Caco-2 (cell line): ENCODE measurements at regions of chr22 and their contacts with region 1.

Region 1: GRCh38 chr22:22357024-22357883 is 112.7 kb downstream of the VPREB1 start:
- DNase-seq: peak; percentile 88 to 91
- H3K4me3 ChIP-seq: no peak overlapping the region
- H3K4me3 Mint-ChIP-seq: no peak overlapping the region
- H3K27ac Mint-ChIP-seq: no peak overlapping the region
- H3K4me1 ChIP-seq: no peaks in the 10 kb centered on the region
- H3K4me1 Mint-ChIP-seq: no peaks in the 10 kb centered on the region
- H3K27me3 ChIP-seq: no peaks in the 10 kb centered on the region
- H3K27me3 Mint-ChIP-seq: peaks cover 16% of the 10 kb centered on the region
- CTCF ChIP-seq: peak; percentile 67 to 79

Region 2: GRCh38 chr22:22342697-22343580 is 14.3 kb before region 1 on chr22:
- CTCF ChIA-PET with region 1: interaction called, 3 read pairs
- POLR2A ChIA-PET with region 1: no interaction called
- intact Hi-C with region 1: loop called (anchors 2 kb)
- DNase-seq: peak; percentile 93 to 94
- H3K4me3 ChIP-seq: no peak overlapping the region
- H3K4me3 Mint-ChIP-seq: no peak overlapping the region
- H3K27ac Mint-ChIP-seq: no peak overlapping the region
- H3K4me1 ChIP-seq: peaks cover 13% of the 10 kb centered on the region; the same call in 1 of the 2 replicates
- H3K4me1 Mint-ChIP-seq: no peaks in the 10 kb centered on the region
- H3K27me3 ChIP-seq: no peaks in the 10 kb centered on the region
- H3K27me3 Mint-ChIP-seq: peaks cover 5% of the 10 kb centered on the region
- CTCF ChIP-seq: peak; percentile 88 to 90

Region 3: DNA sequence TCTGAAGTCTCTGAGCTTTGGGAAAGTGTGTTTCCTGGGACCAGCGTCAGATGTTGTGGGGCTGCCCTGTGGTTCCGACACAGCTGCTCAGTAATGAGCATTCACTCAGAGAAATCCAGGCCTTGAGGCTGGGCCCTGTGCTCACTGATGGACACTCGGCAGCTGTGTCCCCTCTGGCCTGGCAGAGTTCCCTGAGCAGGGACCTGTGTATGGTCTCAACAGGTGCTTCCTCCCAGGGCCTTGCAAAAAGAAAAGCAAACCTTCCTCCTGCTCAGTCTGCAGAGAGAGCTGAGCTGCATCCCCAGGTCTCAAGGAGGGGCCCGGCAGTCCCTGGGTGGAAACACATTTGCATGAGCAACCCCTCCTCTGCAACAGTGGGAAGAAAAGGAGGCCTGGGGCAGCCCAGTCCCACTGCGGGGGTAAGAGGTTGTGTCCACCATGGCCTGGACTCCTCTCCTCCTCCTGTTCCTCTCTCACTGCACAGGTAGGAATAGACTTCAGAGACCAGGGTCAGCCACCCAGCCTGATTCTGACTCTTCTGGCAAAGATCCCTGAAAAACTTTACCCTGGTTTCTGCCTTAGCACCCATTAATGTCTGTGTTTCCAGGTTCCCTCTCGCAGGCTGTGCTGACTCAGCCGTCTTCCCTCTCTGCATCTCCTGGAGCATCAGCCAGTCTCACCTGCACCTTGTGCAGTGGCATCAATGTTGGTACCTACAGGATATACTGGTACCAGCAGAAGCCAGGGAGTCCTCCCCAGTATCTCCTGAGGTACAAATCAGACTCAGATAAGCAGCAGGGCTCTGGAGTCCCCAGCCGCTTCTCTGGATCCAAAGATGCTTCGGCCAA is 18.5 kb after region 1 on chr22:
- CTCF ChIA-PET with region 1: no interaction called
- POLR2A ChIA-PET with region 1: no interaction called
- intact Hi-C with region 1: loop called (anchors 2 kb)
- DNase-seq: no peak
- H3K4me3 ChIP-seq: no peak overlapping the region
- H3K4me3 Mint-ChIP-seq: no peak overlapping the region
- H3K27ac Mint-ChIP-seq: no peak overlapping the region
- H3K4me1 ChIP-seq: no peaks in the 10 kb centered on the region
- H3K4me1 Mint-ChIP-seq: no peaks in the 10 kb centered on the region
- H3K27me3 ChIP-seq: peaks cover 2% of the 10 kb centered on the region; the same call in 1 of the 2 replicates
- H3K27me3 Mint-ChIP-seq: peaks cover 12% of the 10 kb centered on the region
- CTCF ChIP-seq: no peak

Region 4: DNA sequence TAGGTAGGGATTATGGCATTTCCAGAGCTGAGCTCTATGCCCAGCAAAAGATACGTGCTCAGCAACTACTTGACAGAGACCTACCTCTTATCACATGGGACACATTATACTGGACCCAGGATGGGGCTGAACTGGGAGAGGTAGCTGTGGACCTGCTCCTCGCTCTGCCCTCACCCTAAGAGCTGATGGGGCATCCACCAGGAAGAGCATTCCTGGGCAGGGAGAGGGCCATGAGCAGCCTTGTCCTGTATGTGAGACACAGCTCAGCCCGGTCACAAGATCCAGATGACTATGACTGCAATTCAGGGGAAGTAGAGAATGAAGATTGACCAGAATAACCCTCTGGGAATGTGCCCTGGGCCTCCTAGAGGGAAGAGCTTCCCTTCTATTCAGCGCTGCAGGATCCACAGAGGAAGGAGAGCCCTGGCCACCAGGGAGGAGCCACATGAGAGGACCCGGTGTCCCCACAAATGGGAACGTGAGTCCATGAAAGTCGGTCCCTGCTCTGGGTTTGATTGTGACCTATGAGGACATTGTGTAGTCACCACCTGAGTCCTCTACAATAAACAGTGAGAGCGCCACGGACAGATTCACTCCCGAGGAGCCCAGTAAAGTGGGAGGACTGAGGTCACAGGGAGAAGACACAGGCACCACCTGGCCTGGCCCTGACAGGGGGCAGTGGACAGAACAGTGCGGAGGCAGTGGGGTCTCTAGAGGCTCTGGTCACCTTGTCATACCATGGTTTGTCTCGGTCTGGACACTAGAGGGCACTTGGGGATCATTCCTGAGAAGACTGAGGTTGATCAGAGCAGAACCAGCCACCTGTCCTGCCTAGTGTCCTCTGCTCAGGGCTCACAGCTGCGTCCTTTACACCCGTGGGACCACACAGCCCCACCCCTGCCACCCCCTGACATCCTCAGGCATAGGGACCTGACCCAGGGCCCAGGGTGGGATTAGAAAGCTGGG is 51.8 kb after region 1 on chr22:
- CTCF ChIA-PET with region 1: no interaction called
- POLR2A ChIA-PET with region 1: no interaction called
- intact Hi-C with region 1: loop called (anchors 1 kb)
- DNase-seq: peak in 1 of 2 experiments; percentile 58
- H3K4me3 ChIP-seq: no peak overlapping the region
- H3K4me3 Mint-ChIP-seq: no peak overlapping the region
- H3K27ac Mint-ChIP-seq: no peak overlapping the region
- H3K4me1 ChIP-seq: no peaks in the 10 kb centered on the region
- H3K4me1 Mint-ChIP-seq: no peaks in the 10 kb centered on the region
- H3K27me3 ChIP-seq: no peaks in the 10 kb centered on the region
- H3K27me3 Mint-ChIP-seq: peaks cover 29% of the 10 kb centered on the region
- CTCF ChIP-seq: peak; percentile 59 to 73

Region 5: GRCh38 chr22:22422629-22423112 is 65.4 kb after region 1 on chr22:
- CTCF ChIA-PET with region 1: no interaction called
- POLR2A ChIA-PET with region 1: no interaction called
- intact Hi-C with region 1: loop called (anchors 1 kb)
- DNase-seq: peak; percentile 68 to 73
- H3K4me3 ChIP-seq: no peak overlapping the region
- H3K4me3 Mint-ChIP-seq: no peak overlapping the region
- H3K27ac Mint-ChIP-seq: no peak overlapping the region
- H3K4me1 ChIP-seq: no peaks in the 10 kb centered on the region
- H3K4me1 Mint-ChIP-seq: no peaks in the 10 kb centered on the region
- H3K27me3 ChIP-seq: peaks cover 2% of the 10 kb centered on the region
- H3K27me3 Mint-ChIP-seq: peaks cover 19% of the 10 kb centered on the region
- CTCF ChIP-seq: peak; percentile 67 to 83

Region 6: GRCh38 chr22:22508274-22509176 is 151.3 kb after region 1 on chr22 and contains the start of gene ZNF280B:
- CTCF ChIA-PET with region 1: no interaction called
- POLR2A ChIA-PET with region 1: no interaction called
- intact Hi-C with region 1: no loop called
- DNase-seq: peak; percentile 74 to 84
- H3K4me3 ChIP-seq: peak within 1 kb of the TSS; percentile 55
- H3K4me3 Mint-ChIP-seq: peak within 1 kb of the TSS; percentile 69
- H3K27ac Mint-ChIP-seq: peak within 1 kb of the TSS; percentile 35
- H3K4me1 ChIP-seq: no peaks in the 10 kb centered on the region
- H3K4me1 Mint-ChIP-seq: no peaks in the 10 kb centered on the region
- H3K27me3 ChIP-seq: no peaks in the 10 kb centered on the region
- H3K27me3 Mint-ChIP-seq: no peaks in the 10 kb centered on the region
- CTCF ChIP-seq: peak; percentile 44 to 57
- total RNA-seq, gene ZNF280B: 3.9 and 4.0 TPM in 2 replicates